ENCODE measurements at regions of chr1 and their contacts with region 1.

Region 1: DNA sequence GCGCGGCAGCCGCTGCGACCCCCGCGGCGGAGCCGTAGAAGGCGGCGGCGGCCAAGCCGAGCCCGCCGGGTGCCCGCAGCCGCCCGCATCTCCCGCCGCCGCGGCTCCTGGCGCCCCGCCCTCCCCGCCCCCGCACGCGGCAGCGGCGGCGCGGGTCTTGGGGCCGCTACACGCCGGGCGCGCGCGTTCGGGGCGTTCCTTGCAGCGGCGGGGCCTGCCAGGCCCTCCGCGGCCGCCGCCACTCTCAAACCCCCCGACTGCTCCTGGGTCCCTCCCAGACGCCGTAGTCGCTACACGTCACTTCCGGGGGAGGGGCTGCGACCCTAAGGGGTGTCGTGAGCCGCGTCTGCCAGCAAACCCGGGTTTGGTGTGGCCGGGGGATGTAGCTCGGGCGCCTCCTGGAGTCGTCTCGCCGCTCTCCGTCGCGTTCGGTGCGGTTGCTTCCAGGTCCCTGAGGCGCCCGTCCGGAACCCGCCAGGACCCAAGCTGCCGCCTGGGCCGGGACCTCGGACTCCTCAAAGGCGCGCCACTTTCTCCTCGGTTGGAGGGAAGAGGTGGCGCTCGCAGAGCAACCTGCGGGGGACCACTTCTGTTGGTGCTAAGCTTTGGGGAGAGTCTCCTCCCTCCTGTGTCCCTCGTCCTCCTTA is at the start of gene ELK4:
- DNase-seq: peak in 1 of 2 donors; percentile 99
- H3K4me3 ChIP-seq: peak within 1 kb of the TSS; percentile 76 to 86
- H3K27ac ChIP-seq: peak within 1 kb of the TSS; percentile 98
- H3K4me1 ChIP-seq: peaks cover 62% of the 10 kb centered on the region
- H3K27me3 ChIP-seq: no peaks in the 10 kb centered on the region
- CTCF ChIP-seq: peak; percentile 26 to 72 (median 67)
- POLR2A ChIP-seq: peak in 1 of 2 donors; percentile 88
- total RNA-seq, gene ELK4: 24.1 TPM

Region 2: GRCh38 chr1:205598841-205599668 is 32.8 kb before region 1 on chr1:
- intact Hi-C with region 1: loop called (anchors 5 kb)
- DNase-seq: no peak
- H3K4me3 ChIP-seq: no peak overlapping the region
- H3K27ac ChIP-seq: peak overlapping the region; percentile 80
- H3K4me1 ChIP-seq: peaks cover 24% of the 10 kb centered on the region
- H3K27me3 ChIP-seq: no peaks in the 10 kb centered on the region
- CTCF ChIP-seq: no peak
- POLR2A ChIP-seq: no peak

Region 3: DNA sequence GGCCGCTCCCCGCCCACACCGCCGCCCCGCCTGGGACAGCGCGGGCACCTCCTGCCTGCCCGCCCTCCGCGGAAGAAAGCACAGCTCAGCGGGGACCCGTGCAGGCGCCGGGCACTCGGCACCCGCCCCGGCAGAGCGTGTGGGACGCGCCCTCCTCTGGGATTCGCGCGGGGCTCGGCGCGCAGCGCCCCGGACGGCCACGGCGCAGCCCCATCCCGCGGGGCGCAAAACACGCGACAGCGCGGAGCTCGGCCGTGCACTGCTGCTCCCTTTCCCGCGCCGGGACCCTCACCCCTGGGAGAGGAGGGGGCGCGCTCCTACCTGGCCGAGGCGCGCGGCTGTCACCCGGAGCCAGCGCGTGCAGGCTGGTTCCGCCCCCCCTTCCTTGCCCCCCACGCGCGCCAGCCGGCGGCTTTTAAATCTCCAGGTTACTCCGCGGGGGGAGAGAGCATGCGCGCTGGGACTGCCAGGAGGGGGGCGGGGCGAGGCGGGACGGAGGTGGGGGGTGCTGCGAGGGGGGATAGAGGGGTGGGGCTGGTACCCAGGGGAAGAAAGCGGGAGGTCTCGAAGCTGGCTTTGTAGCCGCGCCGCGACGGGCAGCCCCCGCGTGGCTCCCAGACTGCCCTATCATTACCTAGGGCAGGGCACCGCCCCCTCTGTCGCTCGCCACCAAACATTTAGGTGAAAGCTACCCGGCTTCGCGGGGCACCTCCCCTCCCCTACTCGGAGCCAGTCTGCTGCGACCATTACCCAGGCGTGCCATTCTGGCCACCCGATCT is 48.4 kb after region 1 on chr1 and contains the start of gene SLC45A3:
- intact Hi-C with region 1: no loop called
- DNase-seq: no peak
- H3K4me3 ChIP-seq: peak within 1 kb of the TSS; percentile 57 to 58
- H3K27ac ChIP-seq: peak within 1 kb of the TSS; percentile 50
- H3K4me1 ChIP-seq: peaks cover 24% of the 10 kb centered on the region
- H3K27me3 ChIP-seq: no peaks in the 10 kb centered on the region
- CTCF ChIP-seq: no peak
- POLR2A ChIP-seq: no peak
- total RNA-seq, gene SLC45A3: 0.25 TPM

Measured in vagina (tissue), 2 donors.